Activated T-helper 1 cell treated with anti-CD3 and anti-CD28 coated beads, Interleukin-12 subunit alpha, Interleukin-12 subunit beta, Interleukin-2, Interleukin-4 antibody, amounts not matched to agents 30 ng/mL and 10 ng/mL and 1 ng/mL, durations not matched to agents 14 hours and 24 hours and 36 hours (primary cell): ENCODE measurements at regions of chr5 and their contacts with region 1.

Region 1: GRCh38 chr5:142073362-142073988 is 35.1 kb upstream of the NDFIP1 start:
- DNase-seq: no peak
- H3K4me3 Mint-ChIP-seq: no peak overlapping the region
- H3K27ac Mint-ChIP-seq: peak overlapping the region; percentile 95
- H3K4me1 Mint-ChIP-seq: peaks cover 43% of the 10 kb centered on the region
- H3K27me3 Mint-ChIP-seq: no peaks in the 10 kb centered on the region

Region 2: DNA sequence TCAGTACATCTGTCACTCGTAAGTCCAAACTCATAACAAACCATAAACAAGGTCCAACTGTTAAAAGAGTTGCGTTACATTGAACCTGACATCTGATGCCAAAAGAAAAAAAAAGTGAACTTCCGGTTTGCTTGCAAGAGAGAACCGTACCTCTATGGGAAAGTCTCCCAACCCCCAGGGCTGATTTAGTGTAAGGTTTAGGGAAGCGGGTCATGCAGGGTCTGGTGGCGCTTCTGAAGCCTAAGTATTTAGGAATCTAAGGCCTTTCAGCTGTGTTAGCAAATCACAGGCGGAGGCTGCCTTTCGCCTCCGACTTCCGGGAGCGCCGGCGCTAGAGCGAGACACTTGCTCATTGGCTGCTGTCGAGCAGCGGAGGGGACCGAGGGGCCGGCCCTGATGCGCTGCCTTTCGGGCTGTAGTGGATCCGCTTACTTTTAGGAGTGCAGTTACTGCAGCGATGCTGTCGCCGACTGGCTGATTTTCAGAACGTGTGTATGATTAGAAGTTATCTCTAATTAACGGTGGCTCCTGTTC is 48.6 kb before region 1 on chr5:
- intact Hi-C with region 1: loop called (anchors 1 kb)
- DNase-seq: peak; percentile 83
- H3K4me3 Mint-ChIP-seq: peak overlapping the region; percentile 89
- H3K27ac Mint-ChIP-seq: peak overlapping the region; percentile 100
- H3K4me1 Mint-ChIP-seq: peaks cover 23% of the 10 kb centered on the region
- H3K27me3 Mint-ChIP-seq: no peaks in the 10 kb centered on the region

Region 3: GRCh38 chr5:142128675-142129208 is 55.3 kb after region 1 on chr5:
- intact Hi-C with region 1: loop called (anchors 5 kb)
- DNase-seq: no peak
- H3K4me3 Mint-ChIP-seq: peak overlapping the region; percentile 8
- H3K27ac Mint-ChIP-seq: peak overlapping the region; percentile 80
- H3K4me1 Mint-ChIP-seq: peaks cover 45% of the 10 kb centered on the region
- H3K27me3 Mint-ChIP-seq: no peaks in the 10 kb centered on the region